ENCODE measurements at regions of chr9 and their contacts with region 1.

Region 1: DNA sequence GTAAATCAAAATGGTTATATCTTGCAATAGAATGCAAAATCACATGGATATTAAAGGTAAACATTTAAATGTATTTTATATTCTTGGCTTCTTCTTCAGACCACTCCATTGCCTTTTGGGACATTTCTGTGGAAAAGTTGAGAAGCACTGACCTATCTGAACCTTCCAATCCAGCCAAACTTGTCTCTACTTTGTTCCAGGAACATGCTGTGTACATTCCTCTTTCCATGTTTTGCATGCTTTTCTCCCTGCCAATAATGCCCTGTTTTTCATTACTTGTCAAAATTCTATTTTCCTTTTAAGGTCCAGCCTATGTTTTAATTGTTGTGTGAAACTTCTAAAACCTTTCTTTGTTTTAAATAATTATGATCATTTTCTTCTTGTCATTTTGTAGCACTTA is 28.3 kb downstream of the JAK2 start:
- DNase-seq: no peak
- ATAC-seq: peak; percentile 85

Region 2: DNA sequence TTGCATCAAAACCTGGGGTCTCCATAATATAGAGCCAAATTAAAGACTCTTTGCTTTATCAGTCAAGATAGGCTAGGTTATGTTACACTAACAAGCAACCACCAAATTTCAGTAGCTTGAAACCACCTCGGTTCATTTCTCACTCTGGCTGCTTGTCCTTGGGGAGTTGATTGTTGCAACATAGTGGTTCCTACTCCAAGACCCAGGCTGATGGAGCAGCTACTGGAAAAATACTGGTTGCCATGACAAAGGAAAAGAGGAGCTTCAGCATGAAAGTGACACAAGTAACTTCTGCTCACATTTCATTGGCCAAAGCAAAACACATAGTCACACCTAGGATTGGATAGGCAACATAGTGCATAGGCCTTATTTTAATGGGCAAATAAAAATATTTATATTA is 239.2 kb before region 1 on chr9:
- intact Hi-C with region 1: no loop called
- DNase-seq: no peak
- ATAC-seq: peak; percentile 89

Region 3: GRCh38 chr9:5073701-5074100 is 60.3 kb after region 1 on chr9:
- intact Hi-C with region 1: loop called (anchors 10 kb)
- DNase-seq: no peak
- ATAC-seq: no peak

Region 4: DNA sequence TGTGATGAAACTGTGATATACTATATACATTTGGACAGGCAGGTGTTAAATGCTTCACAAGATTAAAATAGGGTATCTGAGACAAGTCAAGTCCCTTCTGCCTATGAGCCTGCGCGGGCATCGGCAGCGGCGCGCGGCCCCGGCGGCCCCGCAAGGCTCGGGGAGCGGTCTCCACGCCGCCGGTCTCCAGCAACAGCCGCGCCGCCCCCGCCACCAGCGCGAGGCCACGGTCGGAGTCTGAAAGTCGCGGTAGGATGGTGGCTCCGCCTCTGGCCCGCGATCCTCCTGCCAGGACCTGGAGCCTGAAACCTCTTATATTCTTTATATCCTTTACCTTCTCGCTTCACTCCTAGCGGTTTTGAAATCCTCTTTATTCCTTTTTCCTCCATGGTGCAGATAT is 72.6 kb after region 1 on chr9:
- intact Hi-C with region 1: no loop called
- DNase-seq: no peak
- ATAC-seq: no peak

Region 5: DNA sequence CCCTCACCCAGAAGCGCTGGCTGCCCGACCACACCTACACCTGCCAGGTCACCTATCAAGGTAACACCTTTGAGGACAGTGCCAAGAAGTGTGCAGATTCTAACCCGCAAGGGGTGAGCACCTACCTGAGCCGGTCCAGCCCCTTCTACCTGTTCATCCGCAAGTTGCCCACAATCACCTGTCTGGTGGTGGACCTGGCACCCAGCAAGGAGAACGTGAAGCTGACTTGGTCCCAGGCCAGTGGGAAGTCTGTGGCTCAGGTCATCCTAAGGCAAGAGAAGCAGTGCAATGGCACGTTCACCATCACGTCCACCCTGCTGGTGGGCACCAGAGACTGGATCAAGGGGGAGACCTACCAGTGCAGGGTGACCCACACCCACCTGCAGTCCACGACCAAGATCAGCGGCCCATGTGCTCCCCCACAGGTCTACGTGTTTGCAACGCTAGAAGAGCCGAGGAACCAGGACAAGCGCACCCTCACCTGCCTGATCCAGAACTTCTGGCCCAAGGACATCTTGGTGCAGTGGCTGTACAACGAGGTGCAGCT is 100.8 kb after region 1 on chr9:
- intact Hi-C with region 1: no loop called
- DNase-seq: peak; percentile 9
- ATAC-seq: no peak

Region 6: DNA sequence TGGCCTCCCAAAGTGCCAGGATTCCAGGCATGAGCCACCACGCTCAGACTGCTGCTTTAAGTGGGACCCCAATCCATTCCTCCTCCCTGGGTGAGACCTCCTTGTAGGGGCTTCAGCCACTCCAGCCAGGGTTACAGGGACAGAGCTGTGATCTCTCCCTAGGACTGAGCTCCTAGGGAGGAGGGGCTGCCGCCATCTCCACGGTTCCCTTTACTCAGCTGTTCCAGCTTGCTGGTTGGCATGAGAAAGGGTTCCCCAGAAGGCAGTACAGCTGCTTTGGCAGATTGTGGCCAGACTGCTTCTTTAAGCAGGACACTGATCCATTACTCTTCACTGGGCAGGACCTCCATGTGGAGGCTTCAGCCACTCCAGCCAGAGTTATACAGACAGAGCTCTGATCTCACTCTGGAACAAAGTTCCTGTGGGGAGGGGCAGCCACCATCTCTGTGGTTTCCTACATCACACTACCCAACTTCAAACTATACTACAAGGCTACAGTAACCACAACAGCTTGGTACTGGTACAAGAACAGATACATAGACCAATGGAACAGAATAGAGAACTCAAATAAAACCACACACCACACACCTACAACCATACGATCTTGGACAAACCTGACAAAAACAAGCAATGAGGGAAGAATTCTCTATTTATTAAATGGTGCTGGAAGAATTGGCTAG is 164.9 kb after region 1 on chr9:
- intact Hi-C with region 1: no loop called
- DNase-seq: no peak
- ATAC-seq: no peak

Measured in Right ventricle myocardium superior (tissue), 1 donor.